ENCODE measurements at regions of chrX and their contacts with region 1.

Region 1: GRCh38 chrX:132990835-132991234 is 32.4 kb upstream of the HS6ST2 start:
- DNase-seq: no peak
- H3K4me3 ChIP-seq: no peak overlapping the region
- CTCF ChIP-seq: no peak

Region 2: DNA sequence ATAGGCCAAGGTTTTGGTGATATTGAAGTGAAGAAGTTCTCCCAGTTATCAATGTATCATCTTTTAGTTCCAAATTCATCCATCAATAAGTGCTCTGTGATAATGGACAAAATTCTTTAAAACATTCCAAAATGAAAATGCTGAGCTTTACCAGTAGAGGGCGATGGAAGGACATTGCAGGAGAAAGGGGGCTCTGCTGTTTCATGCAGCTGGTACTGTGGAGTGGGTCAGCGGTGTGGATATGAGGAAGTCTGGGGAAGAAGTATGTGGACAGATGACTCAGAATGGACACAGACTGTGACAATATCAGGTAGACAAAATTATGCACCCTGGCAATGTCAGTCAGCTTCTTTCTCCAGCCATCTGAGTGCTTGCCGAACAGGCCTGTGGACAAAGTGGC is 14.2 kb after region 1 on chrX:
- CTCF ChIA-PET with region 1: interaction called, 11 read pairs
- POLR2A ChIA-PET with region 1: no interaction called
- DNase-seq: no peak
- H3K4me3 ChIP-seq: no peak overlapping the region
- CTCF ChIP-seq: peak; percentile 53

Measured in AG04449 (cell line).